ENCODE measurements at regions of chr20 and their contacts with region 1.

Region 1: DNA sequence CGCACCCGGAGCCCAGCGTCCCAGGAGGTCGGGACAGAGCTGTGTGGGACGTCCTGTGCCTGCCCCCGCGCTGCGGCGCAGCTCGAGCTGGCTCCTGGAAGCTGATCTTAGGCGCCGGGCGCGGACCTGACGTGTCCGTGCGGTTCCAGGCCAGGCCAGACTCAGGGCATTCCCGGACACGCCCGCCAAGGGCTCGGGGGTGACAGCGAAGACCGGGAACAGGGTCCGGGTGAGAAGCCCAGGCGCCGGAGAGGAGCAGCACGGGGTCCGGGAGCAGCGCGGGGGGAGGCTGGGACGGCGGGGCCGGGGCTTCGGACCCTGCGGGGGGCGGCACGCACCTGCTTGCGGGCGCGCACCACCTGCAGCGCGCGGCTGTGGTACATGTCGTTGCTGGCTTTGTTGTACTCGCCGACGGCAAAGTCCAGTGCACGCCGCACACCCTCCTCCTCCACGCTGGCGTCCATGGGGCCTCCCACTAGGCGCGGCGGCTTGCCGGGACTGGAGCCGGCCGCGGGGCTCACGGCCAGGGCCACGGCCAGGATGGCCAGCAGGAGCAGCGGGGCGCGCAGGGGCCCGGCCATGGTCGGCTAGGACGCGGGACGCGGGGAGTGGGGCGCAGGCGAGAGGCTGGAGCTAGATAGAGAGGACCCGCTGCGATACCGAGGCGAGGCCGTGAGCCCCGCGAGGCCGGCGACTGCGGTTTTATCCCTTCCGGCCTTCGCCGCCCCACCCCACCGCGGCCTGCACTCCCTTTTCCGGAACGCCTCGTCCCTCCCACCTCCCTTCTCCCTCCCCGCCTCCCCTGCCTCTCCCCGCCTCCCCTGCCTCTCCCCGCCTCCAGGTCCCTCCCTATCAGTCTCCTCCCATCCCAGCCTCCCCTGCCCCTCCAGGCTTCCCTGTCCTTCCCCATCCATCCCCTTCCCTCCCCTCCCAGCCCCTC is at the start of gene CST3:
- DNase-seq: peak; percentile 87
- ATAC-seq: peak; percentile 70
- H3K4me3 ChIP-seq: peak within 1 kb of the TSS; percentile 80 to 93 (median 88)
- H3K27ac ChIP-seq: peak within 1 kb of the TSS; percentile 91
- H3K4me1 ChIP-seq: peaks cover 89% of the 10 kb centered on the region
- H3K27me3 ChIP-seq: no peaks in the 10 kb centered on the region; a peak in 1 of 5 replicates
- CTCF ChIP-seq: no peak; the same call in 1 of the 2 replicates
- EP300 ChIP-seq: peak in 1 of 2 experiments; percentile 32; a peak in 3 of 4 replicates
- POLR2A ChIP-seq: peak; percentile 99 to 100
- RAD21 ChIP-seq: peak; percentile 81
- total RNA-seq, gene CST3: 300 and 690 TPM in 2 replicates

Region 2: GRCh38 chr20:23420943-23421931 is 216.3 kb before region 1 on chr20 and contains the start of gene NAPB:
- CTCF ChIA-PET with region 1: no interaction called
- POLR2A ChIA-PET with region 1: interaction called, 13 read pairs
- in situ Hi-C with region 1: no loop called
- intact Hi-C with region 1: no loop called
- DNase-seq: peak; percentile 92
- ATAC-seq: peak; percentile 98
- H3K4me3 ChIP-seq: peak within 1 kb of the TSS; percentile 76 to 99 (median 93)
- H3K27ac ChIP-seq: peak within 1 kb of the TSS; percentile 66
- H3K4me1 ChIP-seq: peaks cover 62% of the 10 kb centered on the region
- H3K27me3 ChIP-seq: no peaks in the 10 kb centered on the region
- CTCF ChIP-seq: peak; percentile 53; the same call in 1 of the 2 replicates
- EP300 ChIP-seq: no peak; a peak in 1 of 4 replicates
- POLR2A ChIP-seq: peak; percentile 75 to 96
- RAD21 ChIP-seq: no peak
- total RNA-seq, gene NAPB: 9.5 and 15.2 TPM in 2 replicates

Region 3: GRCh38 chr20:23585808-23586734 is 51.5 kb before region 1 on chr20:
- CTCF ChIA-PET with region 1: no interaction called
- POLR2A ChIA-PET with region 1: interaction called, 16 read pairs
- in situ Hi-C with region 1: no loop called
- intact Hi-C with region 1: no loop called
- DNase-seq: peak; percentile 96
- ATAC-seq: peak; percentile 89
- H3K4me3 ChIP-seq: peak overlapping the region; percentile 23 to 58 (median 30)
- H3K27ac ChIP-seq: peak overlapping the region; percentile 80
- H3K4me1 ChIP-seq: peaks cover 66% of the 10 kb centered on the region
- H3K27me3 ChIP-seq: no peaks in the 10 kb centered on the region
- CTCF ChIP-seq: peak; percentile 17; the same call in 1 of the 2 replicates
- EP300 ChIP-seq: peak in 1 of 2 experiments; percentile 93; a peak in 3 of 4 replicates
- POLR2A ChIP-seq: peak; percentile 45 to 75
- RAD21 ChIP-seq: no peak

Region 4: DNA sequence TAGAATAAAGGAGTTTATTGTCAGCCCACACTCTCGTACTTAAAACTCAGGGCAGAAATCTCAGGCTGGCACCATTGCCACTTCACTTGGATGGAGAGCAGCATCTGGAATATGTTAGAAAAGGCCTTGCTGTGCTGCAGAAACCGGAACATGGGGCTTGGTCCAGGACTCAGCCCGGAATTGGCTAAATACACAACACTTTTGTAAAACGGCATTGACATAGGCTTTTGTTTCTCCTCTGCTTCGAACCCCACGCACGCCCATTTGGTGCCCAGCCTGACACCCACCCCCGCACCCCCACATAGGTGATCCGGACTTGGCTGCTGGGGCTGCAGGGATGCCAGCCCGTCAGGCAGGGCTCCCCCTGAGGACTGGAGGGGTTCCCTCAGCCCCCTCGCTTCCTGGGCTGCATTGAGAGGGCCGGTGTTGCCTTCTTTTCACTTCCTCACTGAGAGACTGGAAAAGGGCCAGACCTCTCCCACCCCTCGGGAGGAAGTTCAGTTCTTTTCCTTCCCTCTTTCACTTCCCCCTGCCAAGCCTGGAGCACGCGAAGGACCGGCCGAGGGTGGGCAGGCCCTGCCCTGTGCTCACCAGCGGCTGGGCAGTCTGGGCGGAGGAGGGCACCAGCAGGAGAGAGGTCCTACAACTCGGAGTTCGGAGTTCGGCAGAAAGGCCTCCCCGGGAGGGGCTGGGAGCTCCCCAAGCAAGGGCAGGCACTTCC is 18.1 kb after region 1 on chr20:
- CTCF ChIA-PET with region 1: no interaction called
- POLR2A ChIA-PET with region 1: interaction called, 543 read pairs
- in situ Hi-C with region 1: no loop called
- intact Hi-C with region 1: loop called (anchors 1 kb)
- DNase-seq: no peak
- ATAC-seq: no peak
- H3K4me3 ChIP-seq: no peak overlapping the region
- H3K27ac ChIP-seq: no peak overlapping the region
- H3K4me1 ChIP-seq: peaks cover 89% of the 10 kb centered on the region
- H3K27me3 ChIP-seq: no peaks in the 10 kb centered on the region
- CTCF ChIP-seq: no peak
- EP300 ChIP-seq: no peak
- POLR2A ChIP-seq: no peak
- RAD21 ChIP-seq: no peak

Region 5: DNA sequence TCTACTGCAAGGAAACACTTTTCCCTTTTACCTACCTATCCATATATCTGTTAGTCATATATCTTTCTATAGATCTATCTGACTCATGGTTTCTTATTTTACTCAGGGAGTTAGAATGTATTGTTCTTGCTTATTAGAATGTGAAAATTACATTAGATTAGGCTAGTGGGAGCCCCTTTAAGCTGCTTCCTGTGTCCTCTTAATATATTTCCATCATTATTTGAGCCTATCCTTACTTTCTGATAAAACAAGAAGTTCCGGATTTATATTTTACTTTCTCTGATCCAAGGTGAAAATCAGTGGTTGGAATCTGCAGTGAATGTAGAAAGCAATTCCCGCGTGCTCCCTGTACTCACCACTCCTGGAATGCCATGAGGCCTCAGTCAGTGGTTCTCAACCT is 158.0 kb after region 1 on chr20:
- CTCF ChIA-PET with region 1: no interaction called
- POLR2A ChIA-PET with region 1: no interaction called
- in situ Hi-C with region 1: no loop called
- intact Hi-C with region 1: no loop called
- DNase-seq: no peak
- ATAC-seq: no peak
- H3K4me3 ChIP-seq: no peak overlapping the region
- H3K27ac ChIP-seq: no peak overlapping the region
- H3K4me1 ChIP-seq: no peaks in the 10 kb centered on the region
- H3K27me3 ChIP-seq: no peaks in the 10 kb centered on the region; a peak in 1 of 5 replicates
- CTCF ChIP-seq: no peak
- EP300 ChIP-seq: no peak
- POLR2A ChIP-seq: no peak
- RAD21 ChIP-seq: no peak

Measured in HepG2 (cell line).